B cell (primary cell): ENCODE measurements at regions of chr2 and their contacts with region 1.

Region 1: DNA sequence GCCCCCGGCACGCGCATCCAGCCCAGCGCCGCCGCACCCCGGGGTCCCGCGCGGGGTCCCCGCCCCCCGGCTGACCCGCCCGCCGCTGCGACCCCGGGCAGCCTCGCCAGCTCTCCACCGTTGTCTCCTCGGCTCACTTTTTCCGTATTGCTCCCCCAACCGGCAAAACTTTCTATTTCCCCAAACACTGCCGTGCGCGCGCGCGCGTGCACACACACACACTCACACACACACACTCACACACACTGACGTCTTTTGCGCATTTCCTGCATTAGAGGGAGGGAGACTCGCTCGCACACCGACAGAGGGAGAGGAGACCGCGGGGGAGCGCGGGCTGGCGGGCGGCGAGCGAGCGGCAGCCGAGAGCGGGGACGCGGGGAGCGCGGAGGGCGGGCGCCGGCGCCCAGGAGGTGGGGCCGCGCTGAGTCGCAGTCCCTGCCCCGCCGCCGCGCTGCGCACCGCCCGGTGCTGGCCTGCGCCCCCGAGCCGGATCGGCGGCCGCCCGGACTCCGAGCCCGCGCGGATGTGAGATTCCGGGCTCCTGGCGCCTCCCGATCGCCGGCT is 542 bp upstream of the PRKCE start:
- DNase-seq: peak; percentile 99
- ATAC-seq: peak; percentile 88
- H3K4me3 ChIP-seq: peak overlapping the region; percentile 16 to 96 (median 87)
- H3K4me3 Mint-ChIP-seq: peak overlapping the region; percentile 93
- H3K27ac ChIP-seq: peak overlapping the region; percentile 84 to 85
- H3K27ac Mint-ChIP-seq: peak overlapping the region; percentile 97
- H3K4me1 ChIP-seq: peaks cover 25 to 43% of the 10 kb centered on the region in 2 donors
- H3K4me1 Mint-ChIP-seq: peaks cover 46% of the 10 kb centered on the region
- H3K27me3 ChIP-seq: no peaks in the 10 kb centered on the region
- H3K27me3 Mint-ChIP-seq: no peaks in the 10 kb centered on the region
- CTCF ChIP-seq: peak; percentile 57

Region 2: GRCh38 chr2:45567974-45568789 is 82.8 kb before region 1 on chr2:
- CTCF ChIA-PET with region 1: no interaction called
- POLR2A ChIA-PET with region 1: no interaction called
- intact Hi-C with region 1: loop called (anchors 1 kb)
- DNase-seq: peak; percentile 88
- ATAC-seq: peak; percentile 97
- H3K4me3 ChIP-seq: peak overlapping the region; percentile 11 to 70 (median 50)
- H3K4me3 Mint-ChIP-seq: peak overlapping the region; percentile 85
- H3K27ac ChIP-seq: peak overlapping the region; percentile 75 to 91
- H3K27ac Mint-ChIP-seq: peak overlapping the region; percentile 86
- H3K4me1 ChIP-seq: peaks cover 10 to 12% of the 10 kb centered on the region in 2 donors
- H3K4me1 Mint-ChIP-seq: peaks cover 10% of the 10 kb centered on the region
- H3K27me3 ChIP-seq: no peaks in the 10 kb centered on the region
- H3K27me3 Mint-ChIP-seq: no peaks in the 10 kb centered on the region
- CTCF ChIP-seq: no peak

Region 3: GRCh38 chr2:45699032-45699658 is 48.2 kb after region 1 on chr2:
- CTCF ChIA-PET with region 1: interaction called, 3 read pairs
- POLR2A ChIA-PET with region 1: no interaction called
- intact Hi-C with region 1: loop called (anchors 2 kb)
- DNase-seq: no peak
- ATAC-seq: peak; percentile 13
- H3K4me3 ChIP-seq: no peak overlapping the region
- H3K4me3 Mint-ChIP-seq: peak overlapping the region; percentile 75
- H3K27ac ChIP-seq: peak overlapping the region; percentile 39 to 71
- H3K27ac Mint-ChIP-seq: peak overlapping the region; percentile 87
- H3K4me1 ChIP-seq: peaks cover 60 to 66% of the 10 kb centered on the region in 2 donors
- H3K4me1 Mint-ChIP-seq: peaks cover 63% of the 10 kb centered on the region
- H3K27me3 ChIP-seq: no peaks in the 10 kb centered on the region
- H3K27me3 Mint-ChIP-seq: no peaks in the 10 kb centered on the region
- CTCF ChIP-seq: no peak

Region 4: DNA sequence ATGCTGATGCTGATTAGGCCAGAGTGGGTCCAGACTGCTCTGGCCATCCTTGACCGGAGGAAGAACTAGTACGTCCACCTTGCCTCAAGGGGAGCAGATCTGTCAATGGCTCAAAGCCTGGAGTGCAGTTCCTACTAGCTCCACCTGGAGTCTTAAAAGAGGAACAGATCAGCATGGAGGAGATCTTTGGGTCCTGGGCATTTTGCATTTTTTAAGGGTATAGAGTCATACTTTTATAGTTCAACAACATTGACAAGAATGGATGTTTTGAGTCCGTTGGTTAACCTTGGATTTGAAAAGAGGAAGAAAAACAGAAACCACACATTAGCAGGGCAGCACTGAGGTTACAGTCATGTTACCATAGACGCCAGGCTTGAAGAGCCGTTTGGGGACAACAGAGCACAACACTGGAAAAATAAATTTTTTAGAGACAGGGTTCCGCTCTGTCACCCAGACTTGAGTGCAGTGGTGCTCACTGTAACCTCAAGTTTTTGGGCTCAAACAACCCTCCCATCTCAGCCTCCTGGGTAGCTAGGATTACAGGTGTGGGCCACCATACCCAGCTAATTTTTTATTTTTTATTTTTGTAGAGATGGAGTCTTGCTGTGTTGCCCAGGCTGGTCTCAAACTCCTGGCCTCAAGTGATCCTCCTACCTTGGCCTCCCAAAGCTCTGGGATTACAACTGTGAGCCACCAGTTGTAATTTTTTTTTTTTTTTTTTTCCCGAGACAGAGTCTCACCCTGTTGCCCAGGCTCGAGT is 79.0 kb after region 1 on chr2:
- CTCF ChIA-PET with region 1: interaction called, 61 read pairs
- POLR2A ChIA-PET with region 1: interaction called, 89 read pairs
- intact Hi-C with region 1: loop called (anchors 1 kb)
- DNase-seq: peak; percentile 90
- ATAC-seq: peak; percentile 60
- H3K4me3 ChIP-seq: peak overlapping the region in 1 of 5 experiments; percentile 34
- H3K4me3 Mint-ChIP-seq: peak overlapping the region; percentile 79
- H3K27ac ChIP-seq: peak overlapping the region; percentile 91 to 98
- H3K27ac Mint-ChIP-seq: peak overlapping the region; percentile 97
- H3K4me1 ChIP-seq: peaks cover 78 to 87% of the 10 kb centered on the region in 2 donors
- H3K4me1 Mint-ChIP-seq: peaks cover 83% of the 10 kb centered on the region
- H3K27me3 ChIP-seq: no peaks in the 10 kb centered on the region
- H3K27me3 Mint-ChIP-seq: no peaks in the 10 kb centered on the region
- CTCF ChIP-seq: peak; percentile 73

Region 5: DNA sequence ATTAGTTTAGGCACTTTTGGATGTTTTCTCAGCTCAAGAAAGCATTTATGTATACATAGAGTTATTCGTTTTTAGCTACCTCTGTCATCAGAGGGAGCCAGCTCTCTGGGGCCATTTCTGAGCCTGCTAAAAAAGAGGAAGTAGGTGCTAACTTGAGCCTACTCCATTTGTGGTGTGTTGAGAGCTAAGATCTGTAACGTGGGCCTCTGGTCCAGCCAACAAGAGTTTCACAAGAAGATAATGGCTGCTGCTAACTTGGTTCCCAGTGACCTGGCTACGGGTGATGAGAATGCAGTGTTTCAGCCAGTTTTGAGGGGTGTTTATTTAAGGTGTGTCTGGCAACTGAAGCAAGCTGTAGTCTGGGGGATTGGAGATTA is 183.0 kb after region 1 on chr2:
- CTCF ChIA-PET with region 1: interaction called, 13 read pairs
- POLR2A ChIA-PET with region 1: interaction called, 3 read pairs
- intact Hi-C with region 1: loop called (anchors 5 kb)
- DNase-seq: peak; percentile 74
- ATAC-seq: peak; percentile 72
- H3K4me3 ChIP-seq: no peak overlapping the region
- H3K4me3 Mint-ChIP-seq: peak overlapping the region; percentile 44
- H3K27ac ChIP-seq: peak overlapping the region; percentile 43 to 72
- H3K27ac Mint-ChIP-seq: peak overlapping the region; percentile 90
- H3K4me1 ChIP-seq: peaks cover 58 to 60% of the 10 kb centered on the region in 2 donors
- H3K4me1 Mint-ChIP-seq: peaks cover 64% of the 10 kb centered on the region
- H3K27me3 ChIP-seq: no peaks in the 10 kb centered on the region
- H3K27me3 Mint-ChIP-seq: no peaks in the 10 kb centered on the region
- CTCF ChIP-seq: no peak

Region 6: GRCh38 chr2:45935791-45936622 is 285.1 kb after region 1 on chr2:
- CTCF ChIA-PET with region 1: interaction called, 35 read pairs
- POLR2A ChIA-PET with region 1: no interaction called
- intact Hi-C with region 1: no loop called
- DNase-seq: peak; percentile 74
- ATAC-seq: peak; percentile 64
- H3K4me3 ChIP-seq: no peak overlapping the region
- H3K4me3 Mint-ChIP-seq: no peak overlapping the region
- H3K27ac ChIP-seq: no peak overlapping the region
- H3K27ac Mint-ChIP-seq: no peak overlapping the region
- H3K4me1 ChIP-seq: peaks cover 6 to 10% of the 10 kb centered on the region in 2 donors
- H3K4me1 Mint-ChIP-seq: peaks cover 18% of the 10 kb centered on the region
- H3K27me3 ChIP-seq: no peaks in the 10 kb centered on the region
- H3K27me3 Mint-ChIP-seq: no peaks in the 10 kb centered on the region
- CTCF ChIP-seq: peak; percentile 60